ENCODE measurements at regions of chr19 and their contacts with region 1.

Region 1: DNA sequence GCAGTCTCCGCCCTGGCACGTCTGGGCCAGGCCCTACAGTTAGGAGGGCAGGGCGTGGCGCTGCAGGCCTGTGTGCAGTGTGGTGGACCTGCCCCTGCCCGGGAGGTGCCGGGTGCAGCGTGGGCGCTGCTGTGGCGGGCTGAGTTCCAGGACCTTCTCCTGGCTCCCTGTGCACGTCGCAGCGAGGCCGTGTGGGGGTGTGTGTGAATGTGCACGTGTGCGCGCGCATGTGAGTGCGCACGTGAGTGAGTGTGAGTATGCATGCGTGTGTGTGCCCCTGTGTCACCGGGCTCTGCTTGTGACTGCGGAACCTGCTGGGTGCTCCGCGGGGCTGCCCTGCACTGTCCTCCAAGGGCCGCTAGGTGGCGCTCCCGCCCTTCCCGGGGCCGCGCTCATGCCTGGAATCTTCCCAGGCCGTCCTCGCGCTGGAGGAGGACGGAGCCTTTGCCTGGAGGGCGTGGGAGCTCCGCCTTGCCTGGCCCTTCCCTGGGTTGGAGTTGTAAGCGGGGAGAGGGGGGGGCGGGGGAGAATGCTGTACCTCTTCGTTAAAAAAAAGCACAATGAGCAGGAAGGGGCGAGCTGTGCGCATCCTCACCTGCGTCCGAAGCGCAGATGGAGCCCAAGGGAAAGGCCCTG is 79.3 kb downstream of the KDM4B start:
- DNase-seq: peak; percentile 66
- ATAC-seq: peak; percentile 90
- H3K4me3 Mint-ChIP-seq: no peak overlapping the region
- H3K27ac Mint-ChIP-seq: no peak overlapping the region
- H3K4me1 Mint-ChIP-seq: peaks cover 22% of the 10 kb centered on the region
- H3K27me3 Mint-ChIP-seq: no peaks in the 10 kb centered on the region
- CTCF ChIP-seq: peak; percentile 63

Region 2: DNA sequence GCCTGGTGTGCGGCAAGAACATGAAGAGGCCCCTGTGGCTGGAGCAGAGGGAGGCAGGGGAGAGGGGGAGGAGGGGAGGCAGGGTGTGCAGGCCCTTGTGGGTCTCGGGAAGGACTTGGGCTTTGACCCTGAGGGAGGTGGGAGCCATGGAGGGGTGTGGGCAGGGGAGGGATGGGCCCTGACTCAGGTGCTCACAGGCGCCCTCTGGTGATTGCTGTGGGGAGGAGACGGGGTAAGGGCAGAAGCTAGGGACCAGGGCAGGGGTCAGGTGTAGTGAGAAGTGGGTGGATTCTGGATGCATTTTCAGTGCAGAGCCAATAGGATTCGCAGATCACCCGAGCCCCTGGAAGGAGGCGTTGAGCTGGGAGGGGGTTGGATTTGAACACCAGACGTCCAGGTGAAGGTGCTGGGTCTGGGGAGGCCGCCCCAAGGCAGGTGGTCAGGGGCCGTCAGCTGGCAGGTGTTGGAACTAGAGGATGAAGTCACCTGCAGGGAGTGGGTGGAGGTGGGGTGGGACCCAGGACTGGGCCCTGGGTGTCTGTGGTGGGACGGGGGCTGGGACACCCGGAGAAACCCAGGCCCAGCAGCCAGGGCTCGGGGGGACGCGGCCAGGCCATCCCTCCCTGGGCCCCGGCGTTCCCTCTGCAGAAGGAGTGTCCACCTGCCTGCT is 106.1 kb after region 1 on chr19:
- CTCF ChIA-PET with region 1: interaction called, 14 read pairs
- POLR2A ChIA-PET with region 1: interaction called, 3 read pairs
- intact Hi-C with region 1: loop called (anchors 1 kb)
- DNase-seq: peak; percentile 58
- ATAC-seq: peak; percentile 74
- H3K4me3 Mint-ChIP-seq: no peak overlapping the region
- H3K27ac Mint-ChIP-seq: no peak overlapping the region
- H3K4me1 Mint-ChIP-seq: peaks cover 12% of the 10 kb centered on the region
- H3K27me3 Mint-ChIP-seq: no peaks in the 10 kb centered on the region
- CTCF ChIP-seq: no peak

Region 3: DNA sequence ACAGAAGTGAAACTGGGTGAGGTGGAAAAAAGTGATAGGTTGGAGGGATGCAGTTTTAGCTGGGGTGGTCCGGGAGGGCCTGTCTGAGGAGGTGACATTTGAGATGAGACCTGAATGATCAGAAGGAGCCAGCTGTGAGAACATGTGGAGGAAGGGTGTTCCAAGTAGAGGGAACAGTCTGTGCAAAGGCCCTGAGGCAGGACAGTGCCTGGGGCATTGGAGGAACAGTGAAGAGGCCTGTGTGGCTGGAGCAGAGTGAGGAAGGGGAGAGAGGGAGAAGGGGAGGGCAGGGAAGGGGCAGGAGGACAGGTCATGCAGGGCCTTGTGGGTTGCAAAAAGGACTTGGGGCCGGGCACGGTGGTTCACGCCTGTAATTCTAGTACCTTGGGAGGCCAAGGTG is 328.7 kb after region 1 on chr19:
- CTCF ChIA-PET with region 1: no interaction called
- POLR2A ChIA-PET with region 1: no interaction called
- intact Hi-C with region 1: loop called (anchors 2 kb)
- DNase-seq: no peak
- ATAC-seq: no peak
- H3K4me3 Mint-ChIP-seq: no peak overlapping the region
- H3K27ac Mint-ChIP-seq: no peak overlapping the region
- H3K4me1 Mint-ChIP-seq: no peaks in the 10 kb centered on the region
- H3K27me3 Mint-ChIP-seq: peaks cover 7% of the 10 kb centered on the region
- CTCF ChIP-seq: no peak

Region 4: GRCh38 chr19:5480427-5480836 is 432.2 kb after region 1 on chr19:
- CTCF ChIA-PET with region 1: no interaction called
- POLR2A ChIA-PET with region 1: no interaction called
- intact Hi-C with region 1: loop called (anchors 1 kb)
- DNase-seq: no peak
- ATAC-seq: no peak
- H3K4me3 Mint-ChIP-seq: no peak overlapping the region
- H3K27ac Mint-ChIP-seq: no peak overlapping the region
- H3K4me1 Mint-ChIP-seq: no peaks in the 10 kb centered on the region
- H3K27me3 Mint-ChIP-seq: peaks cover 22% of the 10 kb centered on the region
- CTCF ChIP-seq: no peak